ENCODE measurements at regions of chr13 and their contacts with region 1.

Region 1: DNA sequence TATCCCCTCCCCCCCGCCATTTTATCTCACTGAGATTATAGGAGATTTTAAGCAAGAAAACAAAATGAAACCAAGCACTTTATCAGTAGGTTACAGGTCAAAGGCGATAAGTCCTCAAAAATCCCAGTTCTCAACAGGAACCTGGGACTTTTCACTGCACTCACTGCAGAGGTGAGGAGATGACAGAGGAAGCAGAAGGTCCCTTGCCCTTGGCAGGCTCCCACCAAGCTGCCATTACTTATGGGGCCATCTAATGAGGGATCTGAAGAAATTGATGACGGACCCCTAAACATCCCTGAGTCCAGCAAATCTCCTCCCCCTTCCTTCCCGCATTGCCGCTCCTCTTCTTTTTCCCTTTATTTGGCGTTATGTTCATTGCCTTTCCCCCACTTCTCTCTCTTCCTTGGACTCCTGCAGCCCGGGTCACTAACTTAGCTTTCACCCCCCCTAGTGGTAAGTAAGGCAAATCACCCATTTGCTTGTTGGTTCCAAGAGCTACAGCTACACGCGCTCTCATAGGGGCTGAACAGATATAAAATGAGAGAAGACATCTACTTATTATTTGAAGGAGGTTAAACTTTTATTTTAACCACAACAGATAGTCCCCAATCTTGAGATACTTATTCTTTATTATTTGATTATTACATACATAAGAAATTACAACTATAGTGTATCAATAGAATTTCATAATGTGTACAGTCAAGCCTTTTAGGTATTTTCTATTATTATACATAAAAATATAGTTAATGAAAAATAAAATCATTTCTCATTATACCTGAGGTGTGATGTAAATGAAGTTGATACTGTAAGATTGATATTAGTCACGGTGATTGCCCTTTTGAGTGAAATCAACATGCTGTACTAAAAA is 52.0 kb upstream of the ARGLU1 start:
- DNase-seq: peak in 1 of 2 experiments; percentile 17
- H3K4me3 ChIP-seq: no peak overlapping the region
- H3K27ac ChIP-seq: no peak overlapping the region
- H3K4me1 ChIP-seq: no peaks in the 10 kb centered on the region; a peak in 1 of 7 replicates
- H3K27me3 ChIP-seq: no peaks in the 10 kb centered on the region
- CTCF ChIP-seq: peak; percentile 52 to 80 (median 68)
- EP300 ChIP-seq: no peak
- POLR2A ChIP-seq: no peak
- RAD21 ChIP-seq: peak; percentile 73 to 82

Region 2: GRCh38 chr13:106484537-106485193 is 135.3 kb before region 1 on chr13:
- CTCF ChIA-PET with region 1: no interaction called
- POLR2A ChIA-PET with region 1: no interaction called
- DNase-seq: no peak
- H3K4me3 ChIP-seq: no peak overlapping the region
- H3K27ac ChIP-seq: no peak overlapping the region
- H3K4me1 ChIP-seq: no peaks in the 10 kb centered on the region
- H3K27me3 ChIP-seq: no peaks in the 10 kb centered on the region
- CTCF ChIP-seq: no peak
- EP300 ChIP-seq: no peak
- POLR2A ChIP-seq: no peak
- RAD21 ChIP-seq: no peak

Region 3: GRCh38 chr13:106507560-106508274 is 112.2 kb before region 1 on chr13:
- CTCF ChIA-PET with region 1: no interaction called
- POLR2A ChIA-PET with region 1: no interaction called
- DNase-seq: no peak
- H3K4me3 ChIP-seq: no peak overlapping the region
- H3K27ac ChIP-seq: no peak overlapping the region
- H3K4me1 ChIP-seq: peaks cover 0 to 3% (median 1%) of the 10 kb centered on the region in 4 experiments; a peak in 4 of 7 replicates
- H3K27me3 ChIP-seq: no peaks in the 10 kb centered on the region
- CTCF ChIP-seq: no peak
- EP300 ChIP-seq: no peak
- POLR2A ChIP-seq: no peak
- RAD21 ChIP-seq: no peak

Region 4: DNA sequence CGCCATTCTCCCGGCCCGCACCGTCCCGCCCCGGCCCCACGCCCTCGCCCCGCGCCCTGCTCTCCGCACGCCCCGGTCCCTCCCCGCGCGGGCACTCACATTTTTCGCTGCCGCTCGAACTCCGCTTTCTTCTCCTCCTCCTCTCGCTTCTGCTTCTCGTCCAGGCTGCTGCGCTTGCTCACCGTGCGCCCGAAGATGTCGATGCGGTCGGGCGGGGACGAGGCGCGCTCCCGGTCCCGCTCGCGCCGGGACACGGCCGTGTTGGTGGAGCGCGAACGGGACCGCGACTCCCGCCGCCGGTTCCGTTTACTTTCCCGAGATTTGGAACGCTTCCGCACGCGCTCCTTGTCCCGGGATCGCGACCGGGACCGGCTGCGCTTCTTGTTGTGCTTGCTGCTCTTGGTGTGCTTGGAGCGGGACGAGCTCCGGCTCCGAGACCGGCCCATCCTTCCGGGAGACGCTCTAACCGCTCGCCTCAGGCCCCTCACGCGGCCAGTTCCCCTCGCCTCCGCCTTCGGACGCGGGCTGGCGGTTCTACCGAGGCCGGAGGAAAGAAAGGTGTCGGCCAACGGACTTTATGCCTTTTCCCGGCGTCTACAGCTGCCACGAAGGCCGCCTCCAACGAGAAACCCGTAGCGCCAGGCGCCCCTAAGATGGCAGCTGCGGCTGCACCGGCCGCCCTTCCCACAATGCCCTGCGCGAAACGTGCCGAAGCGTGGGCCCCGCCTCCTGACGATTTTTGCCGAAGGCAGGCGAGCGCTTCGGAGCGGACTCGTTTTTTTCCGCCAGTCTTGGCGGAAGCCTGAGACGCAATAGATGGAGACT is 52.2 kb before region 1 on chr13 and contains the start of gene ARGLU1:
- CTCF ChIA-PET with region 1: interaction called, 10 read pairs
- POLR2A ChIA-PET with region 1: interaction called, 5 read pairs
- DNase-seq: peak; percentile 72 to 98
- H3K4me3 ChIP-seq: peak within 1 kb of the TSS; percentile 89 to 98 (median 94)
- H3K27ac ChIP-seq: peak within 1 kb of the TSS; percentile 98
- H3K4me1 ChIP-seq: peaks cover 4 to 13% (median 11%) of the 10 kb centered on the region in 4 experiments; a peak in 5 of 7 replicates
- H3K27me3 ChIP-seq: no peaks in the 10 kb centered on the region
- CTCF ChIP-seq: no peak
- EP300 ChIP-seq: no peak
- POLR2A ChIP-seq: peak; percentile 95 to 97
- RAD21 ChIP-seq: no peak
- total RNA-seq, gene ARGLU1: 81.2 and 84.9 TPM in 2 replicates

Region 5: GRCh38 chr13:106633321-106633720 is 13.4 kb after region 1 on chr13:
- CTCF ChIA-PET with region 1: interaction called, 36 read pairs
- POLR2A ChIA-PET with region 1: no interaction called
- DNase-seq: no peak
- H3K4me3 ChIP-seq: no peak overlapping the region
- H3K27ac ChIP-seq: no peak overlapping the region
- H3K4me1 ChIP-seq: no peaks in the 10 kb centered on the region
- H3K27me3 ChIP-seq: no peaks in the 10 kb centered on the region
- CTCF ChIP-seq: no peak
- EP300 ChIP-seq: no peak
- POLR2A ChIP-seq: no peak
- RAD21 ChIP-seq: no peak